ENCODE measurements at regions of chr7 and their contacts with region 1.

Region 1: GRCh38 chr7:74709880-74710671 is 52.6 kb downstream of the GTF2I start:
- DNase-seq: no peak
- ATAC-seq: no peak
- H3K4me3 ChIP-seq: no peak overlapping the region
- H3K27ac ChIP-seq: no peak overlapping the region
- H3K4me1 ChIP-seq: no peaks in the 10 kb centered on the region
- H3K27me3 ChIP-seq: no peaks in the 10 kb centered on the region
- CTCF ChIP-seq: peak in 1 of 9 donors; percentile 19

Region 2: GRCh38 chr7:74665296-74665938 is 44.7 kb before region 1 on chr7:
- intact Hi-C with region 1: loop called in 1 of 10 experiments (anchors 10 kb)
- DNase-seq: no peak
- ATAC-seq: no peak
- H3K4me3 ChIP-seq: no peak overlapping the region
- H3K27ac ChIP-seq: peak overlapping the region in 3 of 10 donors; percentile 13 to 67 (median 44)
- H3K4me1 ChIP-seq: peaks cover 0 to 85% (median 59%) of the 10 kb centered on the region in 9 donors
- H3K27me3 ChIP-seq: no peaks in the 10 kb centered on the region
- CTCF ChIP-seq: no peak